IMR-90 (cell line): ENCODE measurements at regions of chr6 and their contacts with region 1.

Region 1: GRCh38 chr6:9540534-9541126 is 874.2 kb downstream of the TFAP2A start:
- DNase-seq: peak; percentile 67
- ATAC-seq: peak; percentile 62
- H3K4me3 ChIP-seq: no peak overlapping the region
- H3K27ac ChIP-seq: no peak overlapping the region
- H3K4me1 ChIP-seq: no peaks in the 10 kb centered on the region
- H3K27me3 ChIP-seq: no peaks in the 10 kb centered on the region
- CTCF ChIP-seq: peak; percentile 66
- POLR2A ChIP-seq: no peak
- RAD21 ChIP-seq: peak; percentile 67

Region 2: GRCh38 chr6:9405369-9405768 is 135.3 kb before region 1 on chr6:
- CTCF ChIA-PET with region 1: no interaction called
- POLR2A ChIA-PET with region 1: no interaction called
- dilution Hi-C with region 1: no loop called
- in situ Hi-C with region 1: no loop called
- intact Hi-C with region 1: loop called (anchors 2 kb)
- DNase-seq: peak; percentile 91
- ATAC-seq: peak; percentile 75
- H3K4me3 ChIP-seq: no peak overlapping the region
- H3K27ac ChIP-seq: no peak overlapping the region
- H3K4me1 ChIP-seq: peaks cover 7% of the 10 kb centered on the region
- H3K27me3 ChIP-seq: no peaks in the 10 kb centered on the region
- CTCF ChIP-seq: no peak
- POLR2A ChIP-seq: no peak
- RAD21 ChIP-seq: no peak

Region 3: DNA sequence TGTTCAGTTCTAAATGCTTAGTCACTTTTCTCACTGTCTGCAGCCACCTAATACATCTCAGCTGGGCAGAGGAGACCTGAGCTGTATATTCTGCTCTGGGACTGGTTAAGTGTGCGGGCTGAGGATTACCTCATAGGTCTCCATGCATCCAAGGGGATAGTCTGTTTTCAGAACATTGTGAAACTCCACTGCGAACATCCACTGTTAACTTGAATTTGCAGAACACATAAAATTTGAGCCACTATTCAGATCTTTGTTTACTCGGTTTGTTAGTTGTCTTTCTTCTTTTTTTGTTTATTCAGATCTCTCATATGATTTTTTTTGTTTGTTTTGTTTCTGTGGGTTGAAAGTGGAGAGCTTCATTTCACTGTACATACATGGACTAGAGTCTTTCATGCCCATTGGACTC is 72.8 kb before region 1 on chr6:
- CTCF ChIA-PET with region 1: no interaction called
- POLR2A ChIA-PET with region 1: no interaction called
- dilution Hi-C with region 1: no loop called
- in situ Hi-C with region 1: no loop called
- intact Hi-C with region 1: no loop called
- DNase-seq: peak; percentile 67
- ATAC-seq: peak; percentile 66
- H3K4me3 ChIP-seq: no peak overlapping the region
- H3K27ac ChIP-seq: no peak overlapping the region
- H3K4me1 ChIP-seq: no peaks in the 10 kb centered on the region
- H3K27me3 ChIP-seq: no peaks in the 10 kb centered on the region; the same call in 1 of the 2 replicates
- CTCF ChIP-seq: no peak
- POLR2A ChIP-seq: no peak
- RAD21 ChIP-seq: no peak

Region 4: DNA sequence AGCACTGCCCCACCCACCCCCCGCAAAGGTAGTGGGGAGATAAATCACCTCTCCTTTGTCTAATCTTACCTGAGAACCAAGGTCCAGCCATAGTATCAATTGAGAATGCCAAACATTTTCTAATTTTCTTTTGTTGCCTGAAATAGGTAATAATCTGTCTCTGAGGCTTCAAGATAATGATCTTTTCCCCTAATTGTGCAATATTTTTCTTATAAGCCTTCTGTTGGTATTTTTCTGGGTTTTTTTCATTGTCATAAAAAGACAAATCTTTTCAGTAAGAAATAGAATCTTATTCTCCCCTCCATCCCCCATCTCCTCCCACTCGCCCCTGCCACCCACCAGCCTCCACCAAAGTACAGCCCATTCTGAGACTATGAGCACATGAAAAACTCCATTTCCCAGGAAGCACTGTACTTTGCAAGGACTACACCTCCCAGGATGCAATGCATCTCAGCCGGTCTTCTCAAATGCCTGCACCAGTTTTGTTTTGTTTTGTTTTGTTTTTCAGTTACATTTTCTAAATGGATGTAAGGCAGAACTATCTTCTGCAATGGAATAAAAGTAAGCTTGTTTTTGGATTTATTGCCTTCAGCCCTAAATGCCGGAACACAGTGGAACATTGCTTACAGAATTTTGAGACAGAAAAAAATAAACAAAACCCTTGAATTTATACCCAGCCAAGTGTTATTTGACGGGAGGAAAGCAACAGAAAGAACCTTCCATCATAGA is 606.3 kb after region 1 on chr6:
- CTCF ChIA-PET with region 1: no interaction called
- POLR2A ChIA-PET with region 1: no interaction called
- dilution Hi-C with region 1: no loop called
- in situ Hi-C with region 1: no loop called
- intact Hi-C with region 1: loop called (anchors 10 kb)
- DNase-seq: peak; percentile 8
- ATAC-seq: peak; percentile 82
- H3K4me3 ChIP-seq: peak overlapping the region; percentile 41; the same call in 1 of the 2 replicates
- H3K27ac ChIP-seq: no peak overlapping the region
- H3K4me1 ChIP-seq: no peaks in the 10 kb centered on the region
- H3K27me3 ChIP-seq: no peaks in the 10 kb centered on the region
- CTCF ChIP-seq: no peak
- POLR2A ChIP-seq: no peak
- RAD21 ChIP-seq: no peak

Region 5: GRCh38 chr6:10404107-10404798 is 863.6 kb after region 1 on chr6:
- CTCF ChIA-PET with region 1: no interaction called
- POLR2A ChIA-PET with region 1: no interaction called
- dilution Hi-C with region 1: no loop called
- in situ Hi-C with region 1: loop called (anchors 25 kb)
- intact Hi-C with region 1: no loop called
- DNase-seq: peak; percentile 90
- ATAC-seq: peak; percentile 94
- H3K4me3 ChIP-seq: peak overlapping the region; percentile 68
- H3K27ac ChIP-seq: peak overlapping the region; percentile 67
- H3K4me1 ChIP-seq: peaks cover 2% of the 10 kb centered on the region
- H3K27me3 ChIP-seq: peaks cover 2% of the 10 kb centered on the region
- CTCF ChIP-seq: peak; percentile 48
- POLR2A ChIP-seq: peak; percentile 30; the same call in 1 of the 2 replicates
- RAD21 ChIP-seq: peak; percentile 45

Region 6: GRCh38 chr6:10429638-10430427 is 889.2 kb after region 1 on chr6:
- CTCF ChIA-PET with region 1: no interaction called
- POLR2A ChIA-PET with region 1: no interaction called
- dilution Hi-C with region 1: no loop called
- in situ Hi-C with region 1: no loop called
- intact Hi-C with region 1: loop called (anchors 5 kb)
- DNase-seq: peak; percentile 52
- ATAC-seq: peak; percentile 54; the same call in 1 of the 2 replicates
- H3K4me3 ChIP-seq: no peak overlapping the region
- H3K27ac ChIP-seq: no peak overlapping the region
- H3K4me1 ChIP-seq: no peaks in the 10 kb centered on the region
- H3K27me3 ChIP-seq: peaks cover 12% of the 10 kb centered on the region
- CTCF ChIP-seq: peak; percentile 58
- POLR2A ChIP-seq: no peak
- RAD21 ChIP-seq: peak; percentile 80